ENCODE measurements at regions of chr19 and their contacts with region 1.

Region 1: DNA sequence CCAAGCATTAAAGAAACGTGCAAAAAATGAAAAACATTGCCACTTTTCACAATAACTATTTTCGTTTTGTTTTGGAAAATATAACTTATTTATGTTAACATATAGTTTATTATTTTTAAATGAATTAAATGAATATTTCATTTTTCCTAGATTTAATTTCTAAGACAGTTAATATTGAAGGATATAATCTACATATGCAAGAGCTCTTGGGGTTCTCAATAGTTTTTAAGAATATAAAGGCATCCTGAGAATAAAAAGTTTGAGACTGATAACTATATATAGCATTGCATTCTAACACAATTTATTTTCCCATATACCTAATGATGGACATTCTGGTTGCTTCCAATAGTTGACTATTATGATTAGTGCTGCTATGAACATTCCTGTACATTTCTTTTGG is 19.9 kb downstream of the ZNF461 start:
- DNase-seq: no peak
- ATAC-seq: no peak

Region 2: DNA sequence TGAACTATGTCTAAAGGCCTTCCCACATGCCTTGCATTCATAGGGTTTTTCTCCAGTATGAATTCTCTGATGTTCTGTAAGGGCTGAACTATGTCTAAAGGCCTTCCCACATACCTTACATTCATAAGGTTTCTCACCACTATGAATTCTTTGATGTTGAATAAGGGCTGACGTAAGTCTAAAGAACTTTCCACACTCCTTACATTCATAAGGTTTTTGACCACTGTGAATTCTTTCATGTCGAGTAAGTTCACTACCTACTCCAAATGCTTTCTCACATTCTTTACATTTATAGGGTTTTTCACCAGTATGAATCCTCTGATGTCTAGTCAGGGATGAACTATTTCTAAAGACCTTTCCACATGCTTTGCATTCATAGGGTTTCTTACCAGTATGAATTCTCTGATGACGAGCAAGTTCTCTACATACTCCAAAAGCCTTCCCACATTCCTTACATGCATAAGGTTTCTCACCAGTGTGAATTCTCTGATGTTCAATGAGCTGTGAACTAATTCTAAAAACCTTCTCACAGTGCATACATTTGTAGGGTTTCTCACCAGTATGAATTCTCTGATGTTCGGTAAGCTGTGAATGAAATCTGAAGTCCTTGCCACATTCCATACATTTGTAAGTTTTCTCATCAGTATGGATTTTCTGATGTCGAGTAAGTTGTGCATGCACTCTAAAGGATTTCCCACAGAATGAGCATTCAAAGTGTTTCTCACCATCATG is 99.6 kb before region 1 on chr19:
- intact Hi-C with region 1: loop called (anchors 10 kb)
- DNase-seq: no peak
- ATAC-seq: no peak

Measured in left ventricle myocardium superior (tissue), 1 donor.